ENCODE measurements at regions of chr12 and their contacts with region 1.

Region 1: GRCh38 chr12:65106948-65107347 is 14.2 kb downstream of the WIF1 start:
- DNase-seq: no peak
- ATAC-seq: no peak
- H3K4me3 ChIP-seq: no peak overlapping the region
- H3K27ac ChIP-seq: no peak overlapping the region
- H3K4me1 ChIP-seq: no peaks in the 10 kb centered on the region
- H3K27me3 ChIP-seq: peaks cover 0 to 8% (median 0%) of the 10 kb centered on the region in 9 donors
- CTCF ChIP-seq: peak in 7 of 12 donors; percentile 14 to 42 (median 35)
- POLR2A ChIP-seq: no peak

Region 2: GRCh38 chr12:64883596-64884542 is 223.1 kb before region 1 on chr12:
- intact Hi-C with region 1: loop called in 2 of 10 experiments (anchors 5 to 10 kb)
- DNase-seq: no peak
- ATAC-seq: no peak
- H3K4me3 ChIP-seq: no peak overlapping the region
- H3K27ac ChIP-seq: no peak overlapping the region
- H3K4me1 ChIP-seq: no peaks in the 10 kb centered on the region
- H3K27me3 ChIP-seq: no peaks in the 10 kb centered on the region
- CTCF ChIP-seq: no peak
- POLR2A ChIP-seq: no peak